ENCODE measurements at regions of chr17 and their contacts with region 1.

Region 1: DNA sequence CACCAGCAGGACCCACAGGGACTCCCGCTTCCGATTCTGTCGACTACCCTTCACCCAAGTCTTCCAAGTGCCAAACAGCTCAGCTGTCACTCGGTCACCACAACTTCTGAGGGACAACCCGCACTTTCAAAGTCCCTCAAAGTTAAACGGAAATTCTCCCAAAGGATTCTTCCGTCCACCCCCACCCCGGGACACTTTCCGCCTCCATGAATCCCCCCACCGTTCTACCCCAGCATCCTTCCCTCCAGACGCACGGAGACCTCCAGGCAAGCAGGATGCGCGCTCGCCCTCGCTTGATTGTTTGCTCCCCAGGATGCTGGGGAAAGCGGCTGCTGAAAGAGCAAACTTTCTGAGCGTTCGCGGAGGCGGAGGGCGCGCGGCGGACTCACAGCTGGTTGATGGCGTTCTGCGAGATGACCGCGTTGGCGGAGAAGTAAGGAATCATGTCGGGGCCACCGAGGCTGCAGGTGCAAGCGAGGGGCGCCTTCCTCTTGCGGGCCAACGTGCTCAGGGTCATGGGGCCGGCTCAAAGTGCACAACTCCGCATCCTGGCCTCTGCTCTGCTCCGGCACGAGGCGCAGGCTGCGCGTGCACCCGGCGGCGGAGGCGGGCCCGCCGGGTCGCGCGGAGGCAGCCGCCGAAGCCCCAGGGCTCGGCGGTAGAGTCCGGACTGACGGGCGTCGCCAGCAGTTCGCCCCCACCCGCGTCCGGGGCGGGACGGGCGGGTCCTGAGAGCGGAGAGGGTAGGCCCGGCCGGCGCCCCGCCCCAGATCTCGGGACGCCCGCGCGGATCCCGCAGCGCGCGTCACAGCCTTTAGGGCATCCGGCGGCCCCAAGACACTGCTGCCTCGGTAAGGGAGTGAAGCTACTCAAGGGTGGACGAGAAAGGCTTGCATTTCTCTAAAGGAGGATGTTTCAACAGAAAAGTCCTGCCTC is 138.3 kb upstream of the CORO6 start:
- DNase-seq: peak; percentile 91
- H3K4me3 Mint-ChIP-seq: peak overlapping the region; percentile 97
- H3K27ac Mint-ChIP-seq: peak overlapping the region; percentile 92
- H3K4me1 Mint-ChIP-seq: peaks cover 36% of the 10 kb centered on the region
- H3K27me3 Mint-ChIP-seq: no peaks in the 10 kb centered on the region

Region 2: GRCh38 chr17:29495011-29495410 is 266.0 kb before region 1 on chr17:
- intact Hi-C with region 1: no loop called
- DNase-seq: no peak
- H3K4me3 Mint-ChIP-seq: no peak overlapping the region
- H3K27ac Mint-ChIP-seq: no peak overlapping the region
- H3K4me1 Mint-ChIP-seq: peaks cover 6% of the 10 kb centered on the region
- H3K27me3 Mint-ChIP-seq: no peaks in the 10 kb centered on the region

Region 3: DNA sequence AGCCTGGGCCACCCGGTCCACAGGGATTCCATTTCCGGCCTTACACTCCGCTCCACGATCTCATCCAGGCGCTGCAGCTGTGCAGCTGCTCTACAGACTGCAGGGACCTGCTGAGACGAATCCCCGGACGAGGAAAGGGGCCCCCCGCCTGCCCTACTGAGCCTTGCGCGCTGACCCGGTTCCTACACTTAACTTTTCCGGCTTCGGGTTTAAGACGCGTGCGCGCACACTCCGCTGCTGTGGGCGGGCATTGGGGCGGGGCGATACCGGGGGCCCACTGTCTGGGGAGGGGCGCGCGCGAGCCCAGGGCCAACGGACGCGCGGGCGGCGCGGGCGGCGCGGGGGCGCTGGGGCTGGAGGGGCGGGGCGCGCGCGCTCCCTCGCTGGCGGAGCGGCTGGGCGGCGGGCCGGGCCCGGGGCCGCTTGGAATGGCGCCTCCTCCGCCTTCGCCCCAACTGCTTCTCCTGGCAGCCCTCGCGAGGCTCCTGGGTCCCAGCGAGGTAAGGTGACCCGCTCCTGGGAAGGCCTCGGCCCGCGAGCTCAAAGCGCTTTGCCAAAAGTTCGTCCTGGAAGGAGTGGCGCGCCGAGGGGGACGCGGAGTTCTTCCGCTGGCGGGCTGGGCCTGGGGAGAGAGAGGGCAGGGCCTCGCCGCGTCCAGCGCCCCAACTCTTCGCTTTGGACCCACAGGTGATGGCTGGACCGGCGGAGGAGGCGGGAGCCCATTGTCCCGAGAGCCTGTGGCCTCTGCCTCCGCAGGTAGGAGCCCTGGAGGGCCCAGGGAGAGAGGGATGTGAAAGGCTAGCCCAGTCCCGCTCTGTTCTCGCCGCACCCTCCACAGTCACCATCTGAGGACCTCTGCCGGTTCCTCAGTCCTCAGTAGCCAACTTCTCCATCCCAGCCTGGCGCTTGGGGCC is 192.4 kb before region 1 on chr17 and contains the start of gene TP53I13:
- intact Hi-C with region 1: loop called (anchors 5 kb)
- DNase-seq: peak; percentile 87
- H3K4me3 Mint-ChIP-seq: peak within 1 kb of the TSS; percentile 89
- H3K27ac Mint-ChIP-seq: peak within 1 kb of the TSS; percentile 95
- H3K4me1 Mint-ChIP-seq: peaks cover 20% of the 10 kb centered on the region
- H3K27me3 Mint-ChIP-seq: peaks cover 1% of the 10 kb centered on the region
- total RNA-seq, gene TP53I13: 67.4 and 71.8 TPM in 2 replicates

Region 4: DNA sequence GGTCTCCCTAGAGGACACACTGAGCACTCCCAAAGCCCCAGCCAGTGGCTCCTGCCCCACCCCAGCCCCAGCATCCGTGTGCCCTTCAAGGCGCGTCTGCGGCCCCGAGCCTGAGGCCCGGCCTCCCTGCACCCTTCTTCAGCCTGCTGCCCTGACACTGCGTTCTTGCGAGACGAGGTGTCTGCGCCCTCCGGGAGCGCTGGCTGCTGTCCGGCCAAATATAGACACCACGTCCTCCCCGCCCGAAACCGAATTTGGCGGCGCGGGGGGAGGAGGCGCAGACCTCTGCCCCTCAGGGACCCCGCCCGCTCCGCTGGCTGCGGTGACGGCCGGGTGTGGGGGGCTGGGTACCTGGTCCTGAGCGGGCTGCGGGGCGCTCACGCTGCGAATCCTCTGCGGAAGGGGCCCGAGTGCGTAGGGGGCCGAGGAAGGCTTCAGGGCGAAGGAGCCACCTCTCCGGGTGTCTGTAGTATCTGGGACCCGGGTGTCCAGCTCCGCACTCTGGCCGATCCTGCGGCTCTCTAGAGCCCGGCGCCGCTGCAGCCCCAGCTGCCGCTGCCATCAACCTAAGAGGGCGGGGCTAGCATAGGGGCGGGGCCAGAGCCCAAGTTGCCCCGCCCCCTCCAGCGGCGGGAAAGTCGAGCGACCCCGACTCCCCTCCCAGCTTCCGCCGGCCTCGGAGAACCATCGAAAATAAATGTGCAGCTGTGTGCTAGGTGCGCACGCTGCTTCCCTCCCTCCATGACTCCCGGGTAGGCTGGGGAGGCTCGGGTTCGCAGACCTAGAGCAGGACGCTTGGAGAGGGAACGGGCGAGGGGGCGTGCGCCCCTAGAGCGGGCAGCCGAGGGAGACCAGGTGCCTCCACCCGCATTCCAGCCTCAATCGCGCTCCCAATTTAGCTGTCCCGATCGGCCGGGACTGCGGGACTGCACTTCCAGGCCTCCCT is 138.4 kb before region 1 on chr17 and contains the start of gene CORO6:
- intact Hi-C with region 1: loop called (anchors 1 kb)
- DNase-seq: peak; percentile 56
- H3K4me3 Mint-ChIP-seq: peak within 1 kb of the TSS; percentile 80
- H3K27ac Mint-ChIP-seq: peak within 1 kb of the TSS; percentile 81
- H3K4me1 Mint-ChIP-seq: peaks cover 41% of the 10 kb centered on the region
- H3K27me3 Mint-ChIP-seq: no peaks in the 10 kb centered on the region
- total RNA-seq, gene CORO6: 5.1 and 6.4 TPM in 2 replicates

Region 5: DNA sequence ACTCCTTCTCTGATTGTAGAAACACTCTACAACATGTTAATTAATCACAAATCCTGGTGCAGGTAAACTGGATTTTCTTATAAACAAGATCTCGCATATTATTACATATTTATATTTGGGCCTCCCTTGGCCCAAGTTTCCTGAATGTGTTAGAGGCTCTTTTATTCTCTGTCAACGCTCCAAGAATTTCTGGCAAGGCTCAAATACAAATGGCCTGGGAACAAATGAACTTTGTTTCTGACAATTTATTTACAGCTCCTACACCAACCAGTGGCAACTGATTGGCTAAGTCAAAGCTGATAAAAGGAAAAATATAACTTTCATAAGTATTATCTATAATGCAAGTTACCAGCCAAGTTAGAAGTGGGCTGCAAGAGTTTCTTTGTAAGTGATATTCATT is 73.4 kb before region 1 on chr17:
- intact Hi-C with region 1: loop called (anchors 1 kb)
- DNase-seq: no peak
- H3K4me3 Mint-ChIP-seq: no peak overlapping the region
- H3K27ac Mint-ChIP-seq: no peak overlapping the region
- H3K4me1 Mint-ChIP-seq: peaks cover 25% of the 10 kb centered on the region
- H3K27me3 Mint-ChIP-seq: no peaks in the 10 kb centered on the region

Region 6: DNA sequence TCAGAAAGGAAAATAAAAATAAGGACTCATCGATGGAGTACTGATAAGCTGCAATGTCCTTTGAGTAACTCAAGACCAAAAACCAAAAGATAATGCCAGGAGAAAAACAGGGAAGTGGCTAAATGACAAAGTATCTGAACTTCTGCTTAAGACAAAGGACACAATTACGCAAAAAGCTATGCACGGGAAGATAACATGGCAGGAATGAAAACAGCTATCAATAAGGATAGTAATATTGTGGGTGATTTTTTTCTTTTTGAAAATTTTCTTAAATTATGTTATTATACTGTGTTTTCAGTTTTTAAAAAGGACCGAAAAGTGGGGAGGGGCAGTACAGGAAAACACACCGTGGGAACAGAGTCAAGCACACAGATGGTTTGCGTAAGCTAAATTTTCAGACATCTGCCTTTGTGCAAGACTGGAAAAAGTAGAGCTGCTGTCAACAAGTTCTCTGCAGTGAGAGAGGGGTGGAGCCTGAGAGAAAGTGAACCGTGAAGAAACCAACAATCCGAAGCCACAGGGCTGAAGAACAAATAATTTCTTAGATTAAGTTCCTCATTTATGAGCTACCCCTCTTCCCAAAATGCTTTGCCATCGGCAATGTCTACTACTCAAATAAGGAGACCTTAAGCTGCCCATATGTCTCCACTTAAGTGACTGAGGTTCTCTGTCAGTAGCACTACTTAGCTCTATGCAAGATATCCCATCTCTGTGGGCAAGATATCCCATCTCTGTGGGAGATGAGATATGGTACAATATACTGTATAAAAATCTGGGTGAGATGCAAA is 38.4 kb before region 1 on chr17:
- intact Hi-C with region 1: loop called (anchors 2 kb)
- DNase-seq: no peak
- H3K4me3 Mint-ChIP-seq: peak overlapping the region; percentile 50
- H3K27ac Mint-ChIP-seq: peak overlapping the region; percentile 71
- H3K4me1 Mint-ChIP-seq: peaks cover 60% of the 10 kb centered on the region
- H3K27me3 Mint-ChIP-seq: no peaks in the 10 kb centered on the region